Activated naive CD8-positive, alpha-beta T cell treated with anti-CD3 and anti-CD28 coated beads, Interleukin-2, amount 10 ng/mL, durations not matched to agents 7 days and 5 days (primary cell): ENCODE measurements at regions of chr5 and their contacts with region 1.

Region 1: DNA sequence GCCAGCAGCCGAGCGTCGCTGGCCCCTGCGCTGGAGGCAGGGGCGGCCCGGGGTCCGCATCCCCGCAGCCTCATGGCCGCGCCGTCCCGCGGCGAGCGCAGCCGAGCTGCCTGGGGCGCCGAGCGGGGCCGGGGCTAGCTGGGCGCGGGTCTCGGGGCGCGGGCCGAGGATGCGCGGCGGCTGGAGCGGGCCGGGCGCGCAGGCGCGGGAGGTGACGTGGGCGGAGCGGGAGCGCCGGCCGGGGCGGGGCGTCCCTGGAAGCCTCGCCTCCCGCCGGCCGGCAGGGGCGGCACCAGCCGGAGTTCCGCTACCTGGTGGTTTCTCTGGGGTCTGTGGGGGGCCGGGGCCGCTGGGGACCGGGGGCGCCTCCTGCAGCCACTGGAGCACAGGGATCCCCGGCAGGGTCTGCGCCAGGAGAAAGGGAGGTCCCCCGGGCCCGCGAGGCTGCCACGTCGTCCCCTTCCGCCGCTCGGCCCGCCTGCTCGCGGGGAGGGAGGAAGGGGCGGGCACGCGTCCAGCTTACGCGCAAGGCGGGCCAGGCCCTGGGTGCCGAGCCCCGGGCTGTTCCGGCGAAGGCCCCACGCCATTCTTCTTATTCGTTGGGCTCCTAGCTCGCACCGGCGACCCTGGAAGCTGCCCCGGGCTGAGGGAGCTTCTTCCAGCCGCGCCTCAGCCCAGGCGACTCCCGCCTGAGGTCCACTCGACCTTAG is at the start of gene LPCAT1:
- DNase-seq: peak; percentile 91
- ATAC-seq: peak; percentile 85
- H3K4me3 Mint-ChIP-seq: peak within 1 kb of the TSS; percentile 84
- H3K27ac Mint-ChIP-seq: peak within 1 kb of the TSS; percentile 67
- H3K4me1 Mint-ChIP-seq: peaks cover 17% of the 10 kb centered on the region
- H3K27me3 Mint-ChIP-seq: peaks cover 3% of the 10 kb centered on the region
- total RNA-seq, gene LPCAT1: 70.8 to 72.2 TPM

Region 2: GRCh38 chr5:1536322-1536845 is 12.5 kb after region 1 on chr5:
- POLR2A ChIA-PET with region 1: interaction called, 10 read pairs
- DNase-seq: peak; percentile 57
- ATAC-seq: peak; percentile 96
- H3K4me3 Mint-ChIP-seq: peak overlapping the region; percentile 76
- H3K27ac Mint-ChIP-seq: peak overlapping the region; percentile 84
- H3K4me1 Mint-ChIP-seq: peaks cover 19% of the 10 kb centered on the region
- H3K27me3 Mint-ChIP-seq: peaks cover 23% of the 10 kb centered on the region